ENCODE measurements at regions of chr2 and their contacts with region 1.

Region 1: DNA sequence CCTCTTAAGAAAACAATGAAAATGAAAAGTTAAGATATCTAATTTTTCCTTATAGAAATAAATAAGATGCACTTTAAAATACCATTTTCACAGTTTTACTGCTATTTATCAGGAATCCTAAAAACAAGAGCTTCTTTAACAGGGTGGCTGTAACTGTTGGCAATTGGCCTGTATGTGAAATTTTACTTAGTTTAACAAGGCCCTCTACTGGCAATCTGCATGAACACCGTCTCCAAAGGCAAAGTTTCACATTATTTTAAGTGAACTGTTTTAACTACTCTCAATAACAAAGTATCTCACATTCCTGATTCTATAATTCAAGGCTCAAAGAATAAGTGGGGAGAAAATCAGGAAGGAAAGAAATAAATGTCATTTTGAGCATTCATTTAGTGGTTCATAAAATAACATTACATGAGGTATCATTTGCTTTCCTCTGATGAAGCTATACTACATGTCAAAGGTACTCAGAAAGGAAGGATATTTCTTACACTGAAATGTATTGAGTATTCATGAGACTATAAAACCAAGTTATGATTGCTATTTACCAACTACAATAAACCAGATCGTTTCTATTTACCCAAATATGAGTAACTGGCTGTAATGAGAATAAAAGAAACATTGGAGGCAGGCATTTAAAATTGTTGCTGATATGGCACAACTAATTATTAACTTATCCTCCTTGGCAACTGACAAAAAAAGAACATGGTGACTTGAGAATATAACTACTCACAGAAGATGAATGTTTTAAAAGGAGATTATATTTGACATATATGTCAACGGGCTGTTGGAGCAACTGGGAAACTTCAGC is 7.0 kb downstream of the NCKAP5 start:
- DNase-seq: no peak
- ATAC-seq: peak; percentile 49

Region 2: DNA sequence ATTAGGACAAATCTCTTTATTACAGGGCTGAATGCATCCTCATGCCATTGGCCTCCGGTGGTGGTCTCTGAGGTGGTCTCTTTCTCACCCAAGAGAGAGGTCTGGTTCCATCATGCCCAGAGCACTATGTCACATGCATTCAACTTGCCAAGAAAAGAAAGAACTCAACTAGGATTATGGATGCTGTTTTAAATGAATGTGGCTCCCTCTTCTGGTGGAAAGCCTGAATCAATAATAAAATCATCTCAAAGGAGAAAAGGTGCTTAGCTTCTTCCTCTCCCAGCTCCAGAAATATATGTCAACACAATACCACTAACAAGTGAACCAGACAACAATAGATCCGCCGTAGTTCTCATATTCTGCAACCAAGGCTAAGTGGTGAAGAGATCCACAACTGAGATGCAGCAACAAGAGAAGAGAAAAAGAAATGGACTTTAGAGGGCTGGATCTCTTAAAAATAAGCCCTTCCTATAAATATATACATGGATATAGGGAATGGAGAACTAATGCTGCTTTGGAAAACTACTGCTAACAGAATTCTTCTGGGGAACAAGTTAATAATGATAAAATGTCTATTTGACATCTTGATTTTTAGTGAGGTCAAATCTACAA is 389.8 kb before region 1 on chr2:
- intact Hi-C with region 1: no loop called
- DNase-seq: no peak
- ATAC-seq: no peak

Region 3: DNA sequence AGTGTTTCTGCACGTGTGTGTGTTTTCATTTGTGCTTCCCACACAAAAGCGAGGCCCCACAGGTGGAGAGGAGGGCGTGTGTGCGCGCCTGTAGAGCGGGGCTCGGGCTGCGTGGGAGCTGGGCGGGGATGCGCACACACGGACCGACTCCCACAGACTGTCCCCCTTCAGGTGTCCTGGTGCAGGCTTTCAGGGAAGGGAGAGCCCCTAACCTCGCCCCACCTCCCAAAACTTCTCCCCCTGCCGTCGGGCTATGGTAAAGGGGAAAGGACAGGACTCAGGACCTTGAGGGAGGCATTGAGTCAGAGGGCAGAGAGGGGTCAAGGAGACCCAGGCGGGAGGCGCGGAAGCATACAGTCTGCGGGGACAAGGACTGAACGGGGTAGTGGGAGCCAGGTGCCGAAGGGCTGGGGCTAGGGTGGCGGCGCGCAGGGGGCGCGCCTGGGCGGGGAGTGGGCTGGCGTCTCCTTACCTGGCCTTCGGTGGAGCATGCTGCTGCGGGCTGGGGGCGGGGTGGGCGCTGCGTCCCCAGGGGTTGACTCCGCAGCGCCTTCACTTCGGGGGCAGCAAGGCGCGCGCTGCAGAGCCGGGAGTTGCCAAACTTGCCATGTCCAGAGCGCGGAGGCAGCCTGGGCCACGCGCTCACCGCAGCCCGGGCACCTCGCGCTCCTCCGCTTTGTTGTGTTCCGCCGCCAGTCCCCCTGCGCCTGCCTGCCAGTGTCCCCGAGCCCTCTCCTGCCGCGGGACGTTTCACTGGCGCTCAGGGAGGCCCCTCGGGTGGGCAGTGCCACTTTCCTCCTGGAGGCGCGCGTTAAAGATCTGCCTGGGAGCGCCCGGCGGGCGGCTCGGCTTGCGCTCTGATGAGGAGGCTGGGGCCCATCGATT is 295.0 kb before region 1 on chr2:
- intact Hi-C with region 1: loop called (anchors 10 kb)
- DNase-seq: peak; percentile 40
- ATAC-seq: peak; percentile 60

Region 4: DNA sequence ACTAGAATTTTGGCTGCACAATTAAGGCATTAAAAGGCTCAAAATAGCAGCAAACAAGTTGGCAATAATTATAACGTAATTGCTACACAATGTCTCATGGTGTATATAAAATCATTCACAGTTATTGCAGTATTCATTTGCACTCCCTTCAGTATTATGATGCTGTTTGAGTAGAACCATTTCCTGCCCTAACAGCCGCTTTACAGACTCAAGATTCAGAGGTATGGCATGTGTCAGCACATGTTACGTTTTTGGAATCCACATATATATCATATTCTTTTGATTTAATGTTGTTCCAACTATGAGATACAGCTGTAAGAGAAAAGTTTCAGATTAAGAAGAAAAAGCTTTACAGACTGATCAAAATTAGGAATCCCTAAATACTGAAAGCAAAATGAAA is 63.3 kb after region 1 on chr2:
- intact Hi-C with region 1: no loop called
- DNase-seq: no peak
- ATAC-seq: no peak